ENCODE measurements at regions of chr1 and their contacts with region 1.

Region 1: GRCh38 chr1:17502326-17502778 is 37.1 kb upstream of the ARHGEF10L start:
- DNase-seq: peak; percentile 61
- ATAC-seq: peak; percentile 99
- H3K4me3 ChIP-seq: no peak overlapping the region
- H3K27ac ChIP-seq: no peak overlapping the region
- H3K4me1 ChIP-seq: peaks cover 5 to 16% of the 10 kb centered on the region in 2 experiments; a peak in 3 of 4 replicates
- H3K27me3 ChIP-seq: no peaks in the 10 kb centered on the region
- CTCF ChIP-seq: peak; percentile 91 to 95 (median 94)
- POLR2A ChIP-seq: no peak
- RAD21 ChIP-seq: peak; percentile 99

Region 2: GRCh38 chr1:16644193-16644481 is 858.2 kb before region 1 on chr1:
- CTCF ChIA-PET with region 1: no interaction called
- POLR2A ChIA-PET with region 1: no interaction called
- RAD21 ChIA-PET with region 1: no interaction called
- intact Hi-C with region 1: no loop called
- DNase-seq: no peak
- ATAC-seq: peak; percentile 52
- H3K4me3 ChIP-seq: peak overlapping the region; percentile 74 to 79
- H3K27ac ChIP-seq: peak overlapping the region; percentile 71
- H3K4me1 ChIP-seq: peaks cover 14 to 22% of the 10 kb centered on the region in 2 experiments; a peak in 3 of 4 replicates
- H3K27me3 ChIP-seq: no peaks in the 10 kb centered on the region
- CTCF ChIP-seq: no peak
- POLR2A ChIP-seq: no peak
- RAD21 ChIP-seq: no peak

Region 3: DNA sequence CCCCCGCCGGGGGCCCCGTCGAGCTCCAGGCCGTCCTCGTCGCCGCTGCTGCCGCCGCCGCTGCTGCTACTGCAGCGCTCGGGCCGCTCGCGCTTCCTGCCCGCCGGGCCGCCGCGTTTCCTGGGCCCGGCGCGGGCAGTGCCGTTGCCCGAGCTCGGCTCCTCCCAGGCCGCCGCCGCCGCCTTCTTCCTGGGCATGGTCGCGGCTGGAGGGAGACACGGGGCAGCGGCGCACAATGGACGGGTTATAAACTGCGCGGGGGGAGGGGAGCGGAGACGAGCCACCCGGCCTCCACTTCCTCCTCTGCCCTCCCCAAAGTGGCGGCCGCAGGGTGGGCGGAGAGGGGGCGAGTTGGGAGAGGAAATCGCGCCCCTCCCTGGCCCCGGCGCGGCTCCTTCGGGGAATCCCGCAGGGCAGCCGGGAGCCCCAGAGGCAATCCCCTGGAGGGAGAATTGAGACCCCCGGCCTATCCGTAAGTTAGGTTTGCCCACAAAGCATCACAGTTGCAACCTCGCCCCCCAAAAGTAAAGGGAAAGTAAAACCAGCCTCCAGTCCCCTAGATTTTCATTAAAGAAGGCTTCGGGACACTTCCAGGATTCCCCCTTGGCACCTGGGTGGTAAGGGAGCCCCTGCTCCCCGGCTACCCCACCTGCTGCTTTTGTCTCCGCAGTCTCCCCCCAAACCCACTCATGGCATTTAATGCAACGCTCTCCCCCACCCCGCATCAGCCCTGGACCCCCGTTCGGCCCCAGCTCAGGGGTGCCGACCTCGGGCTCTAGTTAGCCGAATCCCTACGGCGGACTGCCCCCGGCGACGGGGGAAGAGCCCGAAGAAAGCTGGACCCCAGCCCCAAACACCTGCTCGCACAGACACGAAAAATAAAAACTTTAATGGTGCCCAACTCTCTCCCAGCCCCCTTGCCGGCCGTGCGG is 63.8 kb before region 1 on chr1:
- CTCF ChIA-PET with region 1: no interaction called
- POLR2A ChIA-PET with region 1: no interaction called
- RAD21 ChIA-PET with region 1: no interaction called
- intact Hi-C with region 1: no loop called
- DNase-seq: no peak
- ATAC-seq: peak; percentile 47
- H3K4me3 ChIP-seq: peak overlapping the region; percentile 94 to 98
- H3K27ac ChIP-seq: peak overlapping the region; percentile 98
- H3K4me1 ChIP-seq: peaks cover 41 to 53% of the 10 kb centered on the region in 2 experiments
- H3K27me3 ChIP-seq: no peaks in the 10 kb centered on the region
- CTCF ChIP-seq: no peak
- POLR2A ChIP-seq: no peak
- RAD21 ChIP-seq: no peak

Region 4: DNA sequence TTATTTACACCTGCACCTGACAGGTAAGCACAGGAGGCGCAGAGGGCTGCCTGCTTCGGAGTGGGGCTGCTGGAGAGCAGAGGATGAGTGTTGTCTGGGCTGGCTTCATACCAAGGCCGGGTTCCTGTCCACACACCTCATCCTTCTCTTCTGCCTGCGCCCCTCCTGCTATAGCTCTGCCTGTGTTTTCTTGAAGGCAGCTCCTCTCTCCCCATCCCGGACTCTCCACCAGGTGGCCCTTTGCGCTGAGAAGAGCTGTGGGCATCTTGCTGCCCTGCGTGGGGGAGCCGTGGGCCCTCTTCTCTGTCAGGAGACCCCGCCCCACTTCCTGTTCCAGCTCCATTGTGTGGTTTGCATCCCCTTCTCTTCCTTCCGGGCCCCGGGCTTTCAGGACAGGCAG is 72.2 kb after region 1 on chr1:
- CTCF ChIA-PET with region 1: interaction called, 10 read pairs
- POLR2A ChIA-PET with region 1: no interaction called
- RAD21 ChIA-PET with region 1: interaction called in 1 of 2 experiments, 4 read pairs
- intact Hi-C with region 1: loop called (anchors 1 kb)
- DNase-seq: no peak
- ATAC-seq: peak; percentile 42
- H3K4me3 ChIP-seq: no peak overlapping the region
- H3K27ac ChIP-seq: peak overlapping the region; percentile 56; the same call in 1 of the 2 replicates
- H3K4me1 ChIP-seq: peaks cover 61 to 83% of the 10 kb centered on the region in 2 experiments
- H3K27me3 ChIP-seq: no peaks in the 10 kb centered on the region
- CTCF ChIP-seq: peak; percentile 21 to 58 (median 45); a peak in 5 of 6 replicates
- POLR2A ChIP-seq: no peak
- RAD21 ChIP-seq: peak; percentile 50

Measured in HCT116 (cell line).